Left cardiac atrium (tissue), 4 donors: ENCODE measurements at regions of chr21 and their contacts with region 1.

Region 1: GRCh38 chr21:41419911-41420862 is 5.9 kb upstream of the MX1 start:
- DNase-seq: peak; percentile 88
- ATAC-seq: peak; percentile 92 to 97

Region 2: GRCh38 chr21:41361786-41362604 is 58.2 kb before region 1 on chr21 and contains the start of gene MX2:
- intact Hi-C with region 1: loop called in 1 of 2 experiments (anchors 10 kb)
- DNase-seq: peak; percentile 85
- ATAC-seq: peak; percentile 86 to 89
- total RNA-seq, gene MX2: 7.7 to 14.7 TPM